ENCODE measurements at regions of chr1 and their contacts with region 1.

Region 1: DNA sequence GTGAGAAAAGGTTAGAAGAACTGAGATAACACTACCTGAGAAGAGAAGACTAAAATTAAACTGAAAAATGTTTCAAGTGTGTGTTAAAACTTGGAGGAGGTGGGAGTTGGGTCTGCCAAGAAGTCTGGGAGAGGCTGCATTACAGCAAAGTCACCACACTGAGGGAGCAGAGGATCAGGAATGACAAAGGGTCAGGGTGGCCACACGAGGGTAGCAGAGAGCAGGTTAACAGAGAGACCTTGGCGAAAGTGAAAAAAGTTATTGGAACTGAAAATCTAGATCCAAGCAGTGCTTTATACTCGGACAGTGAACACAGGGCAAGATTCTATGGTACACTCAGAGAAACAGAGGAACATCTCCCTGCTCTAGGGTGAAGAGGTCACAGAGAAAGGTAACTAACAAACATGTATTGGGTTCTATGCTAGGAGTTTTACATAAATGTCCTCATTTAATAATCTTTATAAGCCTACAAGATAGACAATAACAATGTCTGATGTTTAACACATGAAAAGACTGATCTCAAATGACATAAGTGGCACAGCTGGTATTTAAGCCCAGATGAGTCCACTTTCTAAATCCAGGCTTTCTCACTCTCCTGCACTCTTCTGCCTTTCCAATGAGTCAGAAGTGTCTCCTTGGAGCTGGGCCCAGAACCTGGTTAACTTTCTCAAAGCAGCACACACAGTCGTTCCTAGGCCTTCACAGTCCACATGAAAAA is 10.3 kb upstream of the CADM3 start:
- DNase-seq: peak; percentile 89
- ATAC-seq: peak; percentile 97

Region 2: GRCh38 chr1:159197561-159198557 is 36.7 kb after region 1 on chr1:
- intact Hi-C with region 1: loop called (anchors 5 kb)
- DNase-seq: peak; percentile 87
- ATAC-seq: peak; percentile 84